GM12878 (cell line): ENCODE measurements at regions of chr1 and their contacts with region 1.

Region 1: DNA sequence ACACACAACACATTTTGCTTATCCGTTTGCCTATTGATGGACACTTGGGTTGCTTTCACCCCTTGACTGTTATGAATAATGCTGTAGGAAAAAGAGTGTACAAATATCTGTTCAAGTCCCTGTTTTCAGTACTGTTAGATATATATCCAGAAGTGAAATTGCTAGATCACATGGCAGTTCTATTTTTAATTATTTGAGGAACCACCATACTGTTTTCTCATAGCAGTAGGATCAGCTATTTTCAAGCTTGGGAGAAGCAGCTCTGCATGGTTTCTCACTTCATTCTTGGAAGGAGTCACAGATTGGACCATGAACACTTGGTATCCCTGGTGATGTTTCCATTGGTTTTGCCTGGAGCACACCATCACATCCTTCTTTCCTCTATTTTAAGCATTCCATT is 114.4 kb upstream of the ZP4 start:
- DNase-seq: no peak
- ATAC-seq: no peak
- H3K4me3 ChIP-seq: no peak overlapping the region
- H3K27ac ChIP-seq: no peak overlapping the region
- H3K4me1 ChIP-seq: no peaks in the 10 kb centered on the region
- H3K27me3 ChIP-seq: no peaks in the 10 kb centered on the region
- CTCF ChIP-seq: no peak
- EP300 ChIP-seq: no peak
- POLR2A ChIP-seq: no peak
- RAD21 ChIP-seq: no peak

Region 2: GRCh38 chr1:237938553-237938952 is 66.6 kb before region 1 on chr1:
- CTCF ChIA-PET with region 1: no interaction called
- POLR2A ChIA-PET with region 1: interaction called, 11 read pairs
- RAD21 ChIA-PET with region 1: no interaction called
- SMC1A ChIA-PET with region 1: no interaction called
- in situ Hi-C with region 1: no loop called
- intact Hi-C with region 1: no loop called
- DNase-seq: no peak
- ATAC-seq: no peak
- H3K4me3 ChIP-seq: no peak overlapping the region
- H3K27ac ChIP-seq: no peak overlapping the region
- H3K4me1 ChIP-seq: no peaks in the 10 kb centered on the region
- H3K27me3 ChIP-seq: no peaks in the 10 kb centered on the region
- CTCF ChIP-seq: no peak
- EP300 ChIP-seq: no peak
- POLR2A ChIP-seq: no peak
- RAD21 ChIP-seq: no peak

Region 3: GRCh38 chr1:237976331-237976730 is 28.8 kb before region 1 on chr1:
- CTCF ChIA-PET with region 1: interaction called, 7 read pairs
- POLR2A ChIA-PET with region 1: no interaction called
- RAD21 ChIA-PET with region 1: interaction called, 5 read pairs
- SMC1A ChIA-PET with region 1: interaction called, 16 read pairs
- in situ Hi-C with region 1: no loop called
- intact Hi-C with region 1: no loop called
- DNase-seq: peak; percentile 13
- ATAC-seq: peak; percentile 86
- H3K4me3 ChIP-seq: no peak overlapping the region
- H3K27ac ChIP-seq: no peak overlapping the region
- H3K4me1 ChIP-seq: no peaks in the 10 kb centered on the region
- H3K27me3 ChIP-seq: no peaks in the 10 kb centered on the region
- CTCF ChIP-seq: no peak
- EP300 ChIP-seq: no peak
- POLR2A ChIP-seq: no peak
- RAD21 ChIP-seq: no peak

Region 4: DNA sequence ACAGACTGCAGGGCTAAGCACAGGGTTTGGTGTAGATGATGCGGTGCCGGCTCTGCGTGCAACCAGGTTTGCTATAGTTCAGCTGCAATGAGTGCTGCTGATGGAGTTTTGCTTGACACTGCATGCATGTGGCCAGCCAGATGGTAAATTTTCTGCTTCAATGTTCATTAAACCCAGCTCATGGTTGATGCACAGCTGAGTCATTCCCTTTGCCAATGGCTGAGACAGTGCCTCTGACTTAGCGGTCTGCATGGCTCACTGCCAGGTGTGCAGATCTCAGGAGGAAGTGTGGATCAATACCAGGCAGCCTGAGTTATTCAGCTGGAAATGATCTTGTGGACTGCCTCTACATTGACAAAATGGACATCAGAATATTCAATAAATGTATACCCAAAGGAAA is 58.3 kb after region 1 on chr1:
- CTCF ChIA-PET with region 1: interaction called, 7 read pairs
- POLR2A ChIA-PET with region 1: no interaction called
- RAD21 ChIA-PET with region 1: interaction called, 15 read pairs
- SMC1A ChIA-PET with region 1: interaction called, 12 read pairs
- in situ Hi-C with region 1: no loop called
- intact Hi-C with region 1: loop called (anchors 10 kb)
- DNase-seq: peak; percentile 60
- ATAC-seq: peak; percentile 67
- H3K4me3 ChIP-seq: no peak overlapping the region
- H3K27ac ChIP-seq: no peak overlapping the region; the same call in 1 of the 2 replicates
- H3K4me1 ChIP-seq: peaks cover 13% of the 10 kb centered on the region
- H3K27me3 ChIP-seq: no peaks in the 10 kb centered on the region
- CTCF ChIP-seq: no peak
- EP300 ChIP-seq: peak in 1 of 2 experiments; percentile 14; a peak in 1 of 4 replicates
- POLR2A ChIP-seq: no peak
- RAD21 ChIP-seq: no peak

Region 5: GRCh38 chr1:238187575-238187949 is 182.4 kb after region 1 on chr1:
- CTCF ChIA-PET with region 1: no interaction called
- POLR2A ChIA-PET with region 1: no interaction called
- RAD21 ChIA-PET with region 1: interaction called, 4 read pairs
- SMC1A ChIA-PET with region 1: interaction called, 10 read pairs
- in situ Hi-C with region 1: no loop called
- intact Hi-C with region 1: no loop called
- DNase-seq: peak; percentile 20
- ATAC-seq: peak; percentile 84
- H3K4me3 ChIP-seq: no peak overlapping the region
- H3K27ac ChIP-seq: no peak overlapping the region
- H3K4me1 ChIP-seq: no peaks in the 10 kb centered on the region
- H3K27me3 ChIP-seq: no peaks in the 10 kb centered on the region
- CTCF ChIP-seq: no peak
- EP300 ChIP-seq: 0 out of 4 replicates have a peak, but pooled peaks of 1 of the 2 experiments have one; percentile 5
- POLR2A ChIP-seq: no peak
- RAD21 ChIP-seq: no peak